ENCODE measurements at regions of chr6 and their contacts with region 1.

Region 1: DNA sequence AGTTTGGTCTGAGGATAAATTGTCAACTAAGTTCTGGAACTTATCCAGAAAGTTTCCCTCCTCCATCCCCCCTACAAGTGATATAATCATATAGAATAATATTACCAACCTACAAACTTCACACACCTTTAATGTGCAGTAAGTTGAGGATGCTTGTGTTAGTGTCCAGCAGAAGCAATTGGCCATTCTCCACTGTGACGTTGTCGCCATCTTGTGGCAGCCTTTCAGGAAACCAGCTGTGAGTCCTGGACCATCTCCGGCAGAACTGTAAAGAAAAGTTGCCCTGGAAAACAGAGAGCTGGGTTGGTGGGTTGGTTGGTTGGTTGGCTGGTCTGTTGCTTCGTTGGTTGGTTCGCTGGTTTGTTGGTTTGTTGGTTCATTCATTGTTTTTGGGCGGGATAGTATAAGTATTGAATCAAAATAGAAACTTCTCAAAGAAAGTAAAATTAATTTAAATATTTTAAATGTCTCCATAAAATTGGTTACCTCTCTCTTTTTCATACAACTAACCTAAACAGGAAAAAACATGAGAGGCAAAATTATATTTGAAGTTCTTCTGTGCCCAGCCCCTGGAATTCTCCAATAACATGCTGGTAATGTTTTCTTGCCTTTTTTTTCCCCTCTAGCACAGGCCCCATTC is 127.5 kb downstream of the PKHD1 start:
- DNase-seq: peak; percentile 31 to 79 (median 76)
- ATAC-seq: peak in 1 of 2 donors; percentile 36
- H3K4me3 ChIP-seq: no peak overlapping the region
- H3K27ac ChIP-seq: no peak overlapping the region
- H3K4me1 ChIP-seq: no peaks in the 10 kb centered on the region
- H3K27me3 ChIP-seq: no peaks in the 10 kb centered on the region

Region 2: DNA sequence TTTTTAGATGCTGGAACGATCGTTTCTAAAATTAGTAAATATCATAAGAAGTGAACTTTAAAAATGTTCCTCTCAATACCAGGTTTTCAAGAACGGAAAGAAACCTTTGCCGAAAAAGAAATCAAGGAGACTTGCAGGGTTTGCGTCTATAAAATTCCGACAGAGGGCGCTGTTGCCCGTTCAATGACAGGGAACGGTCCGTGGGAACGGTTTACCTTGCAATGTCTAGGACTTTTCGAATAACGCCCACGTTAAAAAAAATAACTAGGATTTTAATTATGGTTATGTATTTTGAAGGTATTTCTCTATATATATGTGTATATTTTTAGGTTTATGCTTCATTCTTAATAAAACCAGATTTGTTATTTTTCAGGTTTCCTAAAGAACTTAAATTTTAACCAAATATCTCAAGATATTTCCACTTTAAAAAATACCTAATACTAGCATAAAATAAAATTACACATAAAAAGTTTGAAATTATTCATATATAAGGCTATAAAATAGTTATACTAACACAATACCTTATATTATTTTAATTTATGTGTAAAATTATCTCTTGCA is 1143.7 kb before region 1 on chr6:
- intact Hi-C with region 1: loop called in 2 of 4 experiments (anchors 5 to 10 kb)
- DNase-seq: peak; percentile 54 to 68 (median 58)
- ATAC-seq: peak in 1 of 2 donors; percentile 47
- H3K4me3 ChIP-seq: peak overlapping the region; percentile 77
- H3K27ac ChIP-seq: no peak overlapping the region
- H3K4me1 ChIP-seq: no peaks in the 10 kb centered on the region
- H3K27me3 ChIP-seq: peaks cover 7% of the 10 kb centered on the region

Region 3: DNA sequence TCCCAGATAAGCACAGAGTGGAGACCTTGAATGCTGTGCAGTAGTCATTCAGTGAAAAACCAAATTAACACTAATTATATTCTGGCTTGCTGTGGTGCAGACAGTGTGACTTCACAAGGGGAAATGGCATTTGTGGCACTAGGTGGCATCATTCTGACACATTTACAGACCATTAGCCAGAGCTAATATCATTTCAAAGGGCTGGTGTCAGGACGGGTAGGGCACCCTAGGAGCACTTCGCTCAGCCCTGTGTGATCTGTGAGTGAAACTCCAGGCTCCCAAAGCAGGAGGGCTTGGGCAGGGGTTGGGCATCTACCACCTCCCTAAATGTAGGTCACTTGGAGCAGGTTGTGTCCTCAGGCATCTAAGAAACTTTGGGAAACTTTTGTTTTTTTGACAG is 428.2 kb before region 1 on chr6:
- intact Hi-C with region 1: loop called in 1 of 4 experiments (anchors 5 kb)
- DNase-seq: no peak
- ATAC-seq: peak; percentile 14 to 50
- H3K4me3 ChIP-seq: no peak overlapping the region
- H3K27ac ChIP-seq: no peak overlapping the region
- H3K4me1 ChIP-seq: no peaks in the 10 kb centered on the region
- H3K27me3 ChIP-seq: no peaks in the 10 kb centered on the region

Measured in right cardiac atrium (tissue), 5 donors.